Panc1 (cell line): ENCODE measurements at regions of chr6 and their contacts with region 1.

Region 1: DNA sequence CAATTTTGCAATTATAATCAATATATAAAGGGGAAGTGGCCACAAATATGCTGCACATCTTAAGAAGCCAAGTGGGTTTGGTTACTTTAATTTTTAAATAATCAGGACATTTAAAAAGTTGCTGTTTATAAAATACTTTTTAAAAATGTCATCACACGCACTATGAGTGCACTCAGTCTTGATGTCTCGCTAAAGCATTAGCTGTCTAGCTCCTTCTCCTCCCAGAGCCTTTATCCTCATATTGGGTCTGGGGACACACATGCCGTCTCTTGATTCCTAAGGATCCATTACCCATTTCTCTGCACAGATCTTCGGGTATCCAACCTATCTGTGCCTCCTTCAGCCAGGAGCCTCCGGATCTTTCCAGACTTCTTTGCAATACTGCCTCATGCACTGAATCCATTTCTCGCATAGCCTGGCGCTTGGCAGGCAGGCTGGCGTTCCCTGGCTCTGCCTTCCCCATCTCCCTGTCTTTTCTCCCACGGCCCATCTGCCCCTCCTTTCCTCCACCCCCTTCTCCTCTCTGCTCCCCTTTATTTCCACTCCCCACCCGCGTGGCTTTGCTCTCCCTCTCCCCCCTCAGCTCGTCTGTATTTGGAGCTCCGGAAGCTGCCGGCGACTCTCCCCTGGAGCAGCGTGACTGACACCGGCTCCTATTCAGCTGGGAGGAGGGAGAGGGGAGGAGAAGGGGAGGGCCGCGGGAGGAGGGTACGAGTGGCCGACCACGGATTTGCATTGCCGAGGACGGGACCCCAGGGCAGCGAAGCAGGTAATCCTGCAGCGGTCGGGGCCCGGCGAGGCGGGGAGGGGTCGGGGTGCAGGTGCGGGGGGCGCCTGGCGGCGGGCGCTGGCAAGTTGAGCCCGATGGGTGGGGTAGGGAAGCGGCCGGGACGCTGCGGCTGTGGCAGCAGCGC is at the start of gene CAP2:
- DNase-seq: no peak
- ATAC-seq: peak; percentile 96
- H3K4me3 ChIP-seq: peak within 1 kb of the TSS; percentile 70 to 75
- H3K27ac ChIP-seq: peak within 1 kb of the TSS; percentile 96
- H3K4me1 ChIP-seq: peaks cover 14% of the 10 kb centered on the region; the same call in 1 of the 2 replicates
- H3K27me3 ChIP-seq: no peaks in the 10 kb centered on the region
- CTCF ChIP-seq: no peak
- total RNA-seq, gene CAP2: 37.0 TPM

Region 2: GRCh38 chr6:16956361-16956760 is 436.9 kb before region 1 on chr6:
- CTCF ChIA-PET with region 1: no interaction called
- POLR2A ChIA-PET with region 1: no interaction called
- in situ Hi-C with region 1: no loop called
- intact Hi-C with region 1: no loop called
- DNase-seq: no peak
- ATAC-seq: no peak
- H3K4me3 ChIP-seq: no peak overlapping the region
- H3K27ac ChIP-seq: no peak overlapping the region
- H3K4me1 ChIP-seq: no peaks in the 10 kb centered on the region
- H3K27me3 ChIP-seq: peaks cover 4% of the 10 kb centered on the region; the same call in 1 of the 2 replicates
- CTCF ChIP-seq: no peak

Region 3: GRCh38 chr6:17281100-17281494 is 112.1 kb before region 1 on chr6 and contains the start of gene RBM24:
- CTCF ChIA-PET with region 1: no interaction called
- POLR2A ChIA-PET with region 1: no interaction called
- in situ Hi-C with region 1: no loop called
- intact Hi-C with region 1: loop called (anchors 10 kb)
- DNase-seq: no peak
- ATAC-seq: peak; percentile 73
- H3K4me3 ChIP-seq: peak within 1 kb of the TSS; percentile 83 to 89
- H3K27ac ChIP-seq: peak within 1 kb of the TSS; percentile 89
- H3K4me1 ChIP-seq: peaks cover 31% of the 10 kb centered on the region
- H3K27me3 ChIP-seq: no peaks in the 10 kb centered on the region
- CTCF ChIP-seq: peak; percentile 68
- total RNA-seq, gene RBM24: 23.0 TPM

Region 4: GRCh38 chr6:17504005-17504404 is 110.8 kb after region 1 on chr6:
- CTCF ChIA-PET with region 1: no interaction called
- POLR2A ChIA-PET with region 1: interaction called, 12 read pairs
- in situ Hi-C with region 1: no loop called
- intact Hi-C with region 1: no loop called
- DNase-seq: no peak
- ATAC-seq: no peak
- H3K4me3 ChIP-seq: no peak overlapping the region
- H3K27ac ChIP-seq: no peak overlapping the region
- H3K4me1 ChIP-seq: no peaks in the 10 kb centered on the region
- H3K27me3 ChIP-seq: no peaks in the 10 kb centered on the region
- CTCF ChIP-seq: no peak